Transverse colon (tissue), 4 donors: ENCODE measurements at regions of chr15 and their contacts with region 1.

Region 1: GRCh38 chr15:78618490-78618934 is 2.3 kb downstream of the CHRNA3 start:
- DNase-seq: peak; percentile 89
- H3K4me3 ChIP-seq: no peak overlapping the region
- H3K27ac ChIP-seq: peak overlapping the region in 3 of 4 donors; percentile 25 to 77 (median 51)
- H3K4me1 ChIP-seq: peaks cover 5 to 25% (median 18%) of the 10 kb centered on the region in 4 donors
- H3K27me3 ChIP-seq: peaks cover 49% of the 10 kb centered on the region
- CTCF ChIP-seq: peak; percentile 85 to 91 (median 90)
- EP300 ChIP-seq: peak; percentile 64
- POLR2A ChIP-seq: no peak

Region 2: DNA sequence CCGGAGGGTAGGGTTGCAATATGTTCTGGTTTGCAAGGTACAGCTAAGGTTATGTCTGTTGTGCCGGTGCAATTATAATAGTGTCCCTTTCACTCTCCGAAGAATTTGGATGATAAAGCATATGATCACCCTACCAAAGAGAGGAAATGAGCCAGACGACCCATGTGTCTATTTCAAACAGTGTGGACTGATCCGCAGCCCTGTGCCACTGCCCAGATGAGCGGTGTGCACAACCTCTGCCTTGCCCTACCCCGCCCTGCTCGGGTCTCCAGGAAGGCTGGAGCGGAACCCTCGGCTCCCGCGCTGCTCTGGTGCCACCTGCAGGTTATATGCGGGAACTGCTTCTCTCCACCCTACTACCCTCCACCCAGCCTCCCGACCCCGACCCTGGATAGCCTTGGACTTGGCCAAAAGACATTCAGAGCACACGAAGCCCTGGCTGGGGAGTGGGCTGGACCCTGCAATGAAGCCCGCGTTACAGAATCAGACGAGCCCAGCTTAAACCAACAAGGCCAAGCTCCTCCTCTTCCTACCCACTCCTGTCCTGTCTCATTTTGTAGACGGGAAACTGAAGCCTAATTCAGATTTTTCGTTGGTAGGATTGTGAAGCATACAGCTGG is 90.9 kb after region 1 on chr15:
- in situ Hi-C with region 1: loop called (anchors 5 to 10 kb)
- intact Hi-C with region 1: loop called (anchors 1 kb)
- DNase-seq: peak; percentile 75
- H3K4me3 ChIP-seq: peak overlapping the region in 1 of 4 donors; percentile 17
- H3K27ac ChIP-seq: no peak overlapping the region
- H3K4me1 ChIP-seq: peaks cover 0 to 6% (median 1%) of the 10 kb centered on the region in 4 donors
- H3K27me3 ChIP-seq: peaks cover 21% of the 10 kb centered on the region
- CTCF ChIP-seq: peak; percentile 87 to 91 (median 88)
- EP300 ChIP-seq: no peak
- POLR2A ChIP-seq: no peak

Region 3: DNA sequence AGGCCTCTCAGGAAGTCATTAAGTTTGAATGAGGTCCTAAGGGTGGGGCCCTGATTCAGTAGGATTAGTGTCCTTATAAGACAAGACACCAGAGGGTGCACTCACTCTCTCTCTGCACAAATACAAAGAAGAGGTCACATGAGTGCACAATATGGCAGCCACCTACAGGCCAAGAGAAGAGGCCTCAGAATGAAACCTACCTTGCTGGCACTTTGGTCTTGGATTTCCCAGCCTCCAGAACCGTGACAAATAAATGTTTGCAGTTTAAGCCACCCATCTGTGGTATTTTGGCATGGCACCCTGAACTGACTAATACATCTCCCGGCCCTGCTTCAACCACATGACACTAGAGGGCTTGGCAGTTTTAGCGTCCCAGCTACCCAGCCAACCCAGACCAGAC is 96.4 kb after region 1 on chr15:
- in situ Hi-C with region 1: loop called in 1 of 4 experiments (anchors 5 kb)
- intact Hi-C with region 1: no loop called
- DNase-seq: no peak
- H3K4me3 ChIP-seq: no peak overlapping the region
- H3K27ac ChIP-seq: no peak overlapping the region
- H3K4me1 ChIP-seq: no peaks in the 10 kb centered on the region
- H3K27me3 ChIP-seq: peaks cover 1% of the 10 kb centered on the region
- CTCF ChIP-seq: no peak
- EP300 ChIP-seq: no peak
- POLR2A ChIP-seq: no peak